ENCODE measurements at regions of chr14 and their contacts with region 1.

Region 1: DNA sequence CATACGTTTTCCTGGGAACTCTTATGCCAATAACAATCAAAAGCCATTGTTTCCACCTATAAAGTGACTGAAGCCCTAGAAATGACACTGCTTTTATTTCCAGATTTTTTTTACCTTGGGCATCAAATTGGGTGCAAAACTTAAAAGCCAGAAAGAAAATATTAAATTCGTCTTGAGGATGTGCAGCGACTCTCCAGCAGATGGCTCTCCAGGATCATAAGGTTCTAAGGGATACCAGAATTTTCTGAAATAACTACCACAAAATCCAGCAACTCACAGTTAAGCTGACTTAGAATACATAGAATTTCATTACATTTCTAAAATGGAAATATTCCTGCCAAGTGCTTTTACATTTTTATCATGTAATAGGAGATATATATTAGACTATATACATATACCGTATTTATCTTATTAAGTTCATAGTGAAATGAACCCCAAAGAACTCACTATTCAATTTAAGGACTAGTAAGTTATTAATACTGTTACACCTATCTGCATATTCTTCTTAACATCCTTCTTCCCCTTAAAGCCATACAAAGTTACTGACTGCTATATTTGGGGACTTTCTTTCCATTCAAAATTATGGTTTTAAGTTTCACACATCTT is 44.0 kb downstream of the ARMH4 start:
- DNase-seq: peak; percentile 24
- H3K4me3 ChIP-seq: no peak overlapping the region
- H3K27ac ChIP-seq: no peak overlapping the region
- H3K4me1 ChIP-seq: no peaks in the 10 kb centered on the region
- H3K27me3 ChIP-seq: no peaks in the 10 kb centered on the region
- CTCF ChIP-seq: peak; percentile 59 to 73 (median 71)
- EP300 ChIP-seq: no peak
- POLR2A ChIP-seq: no peak

Region 2: DNA sequence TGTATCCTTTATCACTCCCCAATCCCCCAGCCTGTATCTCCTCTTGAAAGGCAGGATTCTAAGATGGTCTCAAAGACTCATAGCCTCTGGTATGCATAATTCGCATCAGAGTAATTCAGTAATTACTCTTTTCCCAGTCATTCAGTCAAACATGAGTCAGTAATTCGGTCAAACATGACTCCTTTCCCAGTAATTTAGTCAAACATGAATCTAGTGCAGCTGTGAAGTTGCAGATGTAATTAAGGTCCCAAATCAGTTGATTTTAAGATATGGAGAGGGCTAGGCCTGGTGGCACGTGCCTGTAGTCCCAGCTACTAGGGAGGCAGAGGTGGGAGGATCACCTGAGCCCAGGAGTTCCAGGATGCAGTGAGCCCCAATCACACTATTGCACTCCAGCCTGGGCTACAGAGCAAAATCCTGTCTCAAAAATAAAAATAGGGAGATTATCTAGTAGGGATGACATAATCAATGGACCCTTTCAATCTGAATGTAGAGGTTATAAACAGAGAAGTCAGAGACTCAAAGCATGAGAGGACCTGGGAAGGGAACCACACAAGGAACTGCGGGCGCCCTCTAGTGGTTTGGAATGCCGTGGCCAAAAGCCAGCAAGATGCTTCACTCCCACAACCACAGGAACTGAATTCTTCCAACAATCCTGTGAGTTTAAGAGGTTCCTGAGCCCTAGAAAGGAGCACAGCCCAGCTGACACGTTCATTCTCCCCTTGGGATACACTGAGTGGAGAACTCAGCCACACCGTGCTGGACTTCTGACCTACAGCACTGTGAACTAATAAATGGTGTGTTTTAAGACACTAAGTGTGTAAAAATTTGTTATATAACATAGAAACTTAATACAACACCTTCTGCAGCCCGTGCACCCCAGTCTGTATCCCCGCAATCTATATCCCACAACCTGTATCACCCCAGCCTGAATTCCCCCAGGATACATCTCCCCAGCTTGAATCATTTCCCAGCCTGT is 58.2 kb after region 1 on chr14:
- in situ Hi-C with region 1: loop called in 3 of 4 experiments (anchors 10 kb)
- intact Hi-C with region 1: loop called (anchors 5 kb)
- DNase-seq: peak; percentile 85
- H3K4me3 ChIP-seq: no peak overlapping the region
- H3K27ac ChIP-seq: no peak overlapping the region
- H3K4me1 ChIP-seq: no peaks in the 10 kb centered on the region
- H3K27me3 ChIP-seq: no peaks in the 10 kb centered on the region
- CTCF ChIP-seq: peak; percentile 66 to 93 (median 87)
- EP300 ChIP-seq: no peak
- POLR2A ChIP-seq: no peak

Region 3: DNA sequence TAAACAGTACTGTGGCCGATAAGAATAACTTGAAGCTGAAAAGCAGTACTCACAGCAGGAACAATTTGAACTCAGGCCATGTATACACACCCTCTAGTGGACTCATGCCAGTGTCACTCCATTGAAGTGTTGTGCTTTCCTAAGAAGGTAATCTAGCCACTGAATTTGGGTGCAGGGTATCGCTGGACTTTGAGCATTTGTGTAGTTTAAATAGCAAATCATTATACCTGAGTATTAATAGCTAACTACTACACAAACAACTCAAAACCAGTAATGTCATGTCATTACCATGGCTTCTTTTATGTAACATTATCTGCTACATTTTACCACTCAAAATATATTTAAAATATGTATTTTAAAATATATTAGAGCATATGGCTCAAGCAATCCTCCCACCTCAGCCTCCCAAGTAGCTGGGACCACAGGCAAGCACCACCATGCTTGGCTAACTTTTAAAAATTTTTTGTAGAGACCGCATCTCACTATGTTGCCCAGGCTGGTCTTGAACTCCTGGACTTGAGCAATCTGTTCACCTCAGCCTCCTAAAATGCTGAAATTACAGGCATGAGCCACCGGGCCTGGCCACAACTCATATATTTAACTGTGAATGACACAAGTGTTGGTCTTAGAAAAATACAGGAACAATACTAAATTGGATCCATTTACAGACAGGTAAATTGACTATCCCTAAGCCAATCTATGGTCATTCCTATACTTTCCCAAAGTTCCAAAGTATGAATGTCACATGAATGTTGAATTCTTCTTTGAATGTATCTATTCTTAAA is 164.7 kb after region 1 on chr14:
- in situ Hi-C with region 1: no loop called
- intact Hi-C with region 1: no loop called
- DNase-seq: no peak
- H3K4me3 ChIP-seq: no peak overlapping the region
- H3K27ac ChIP-seq: peak overlapping the region in 3 of 4 donors; percentile 39 to 43 (median 40)
- H3K4me1 ChIP-seq: peaks cover 6 to 38% (median 11%) of the 10 kb centered on the region in 4 donors
- H3K27me3 ChIP-seq: no peaks in the 10 kb centered on the region
- CTCF ChIP-seq: peak in 4 of 5 experiments; percentile 10 to 27 (median 12)
- EP300 ChIP-seq: no peak
- POLR2A ChIP-seq: no peak

Region 4: DNA sequence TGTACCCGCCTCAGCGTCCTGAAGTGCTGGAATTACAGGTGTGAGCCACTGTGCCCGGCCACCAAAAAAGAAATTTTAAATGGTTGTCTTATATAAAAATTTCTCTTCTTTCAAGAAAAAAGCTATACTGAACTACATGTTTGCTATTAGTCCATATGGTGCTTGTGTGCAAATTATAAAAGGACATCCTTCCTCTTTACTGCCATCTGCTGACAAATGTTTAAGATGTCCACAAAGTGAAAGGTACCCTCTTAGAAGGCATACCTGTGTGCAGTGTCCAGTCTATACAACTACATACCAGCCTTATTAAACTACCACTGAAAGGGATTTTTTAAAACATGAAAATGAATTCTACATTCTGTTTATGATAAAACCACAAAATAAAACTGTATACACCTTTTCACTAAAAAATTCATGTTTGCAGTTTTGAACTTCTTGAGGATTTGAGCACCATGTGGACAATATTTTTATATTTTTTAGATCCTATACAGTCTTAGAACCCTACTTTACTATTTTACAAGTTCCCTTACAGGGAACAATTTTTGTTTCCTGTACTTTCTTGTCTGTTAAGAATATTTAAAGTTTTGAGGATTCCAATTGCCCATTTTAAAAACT is 254.9 kb after region 1 on chr14:
- in situ Hi-C with region 1: loop called in 1 of 4 experiments (anchors 25 kb)
- intact Hi-C with region 1: no loop called
- DNase-seq: no peak
- H3K4me3 ChIP-seq: no peak overlapping the region
- H3K27ac ChIP-seq: no peak overlapping the region
- H3K4me1 ChIP-seq: no peaks in the 10 kb centered on the region
- H3K27me3 ChIP-seq: no peaks in the 10 kb centered on the region
- CTCF ChIP-seq: peak in 3 of 5 experiments; percentile 10 to 20 (median 16)
- EP300 ChIP-seq: no peak
- POLR2A ChIP-seq: no peak

Region 5: DNA sequence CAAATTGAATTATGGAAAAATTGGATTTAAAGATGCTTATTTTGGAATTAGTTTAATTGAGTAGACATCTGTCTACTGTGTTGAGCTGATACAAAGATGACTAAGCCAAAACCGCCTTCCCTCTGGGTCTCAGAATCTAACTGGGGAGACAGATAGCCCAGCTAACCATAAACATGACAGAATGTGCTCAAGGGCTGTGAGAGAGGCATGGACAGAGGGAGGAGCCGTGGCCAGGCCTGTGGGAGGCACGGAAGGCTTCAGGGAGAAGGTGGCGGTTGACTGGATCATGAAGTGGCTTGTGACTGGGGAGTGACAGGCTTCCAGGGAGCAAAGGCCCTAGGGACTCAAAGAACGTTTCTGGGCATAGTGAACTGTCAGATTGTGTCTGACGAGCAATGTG is 604.3 kb after region 1 on chr14:
- in situ Hi-C with region 1: no loop called
- intact Hi-C with region 1: no loop called
- DNase-seq: no peak
- H3K4me3 ChIP-seq: no peak overlapping the region
- H3K27ac ChIP-seq: no peak overlapping the region
- H3K4me1 ChIP-seq: peaks cover 0 to 7% (median 0%) of the 10 kb centered on the region in 4 donors
- H3K27me3 ChIP-seq: no peaks in the 10 kb centered on the region
- CTCF ChIP-seq: no peak
- EP300 ChIP-seq: no peak
- POLR2A ChIP-seq: no peak

Measured in transverse colon (tissue), 4 donors.